Heart right ventricle (tissue), 16 donors: ENCODE measurements at regions of chr1 and their contacts with region 1.

Region 1: DNA sequence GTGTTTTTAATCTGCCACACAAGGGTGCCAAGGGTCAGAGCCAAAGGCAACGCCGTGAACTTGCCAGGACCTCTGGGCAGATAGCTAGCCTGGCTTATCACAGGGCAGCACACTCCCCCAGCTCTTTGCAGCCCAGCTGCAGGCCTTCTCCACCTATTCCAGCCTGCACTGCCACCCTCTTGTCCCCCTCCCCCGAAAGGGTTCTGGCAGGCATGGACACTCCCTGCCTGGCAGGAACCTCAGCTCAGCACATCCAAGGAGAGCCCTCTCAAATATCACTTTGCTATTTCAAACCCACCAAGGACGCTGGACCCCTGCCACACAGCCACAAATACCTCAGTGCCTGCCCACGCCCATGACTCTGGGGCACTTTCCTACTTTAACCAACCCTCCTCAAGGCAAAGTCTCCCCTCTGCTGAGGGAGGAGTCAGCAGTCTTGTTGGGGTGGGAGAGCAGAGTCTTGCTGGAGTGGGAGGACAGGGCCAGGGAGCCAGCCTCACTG is 9.1 kb downstream of the SSBP3 start:
- DNase-seq: peak; percentile 69 to 77
- ATAC-seq: peak; percentile 88 to 96 (median 94)
- H3K4me3 ChIP-seq: no peak overlapping the region
- H3K27ac ChIP-seq: peak overlapping the region in 9 of 10 donors; percentile 50 to 86 (median 73)
- H3K4me1 ChIP-seq: peaks cover 0 to 74% (median 46%) of the 10 kb centered on the region in 9 donors
- H3K27me3 ChIP-seq: no peaks in the 10 kb centered on the region
- CTCF ChIP-seq: no peak

Region 2: DNA sequence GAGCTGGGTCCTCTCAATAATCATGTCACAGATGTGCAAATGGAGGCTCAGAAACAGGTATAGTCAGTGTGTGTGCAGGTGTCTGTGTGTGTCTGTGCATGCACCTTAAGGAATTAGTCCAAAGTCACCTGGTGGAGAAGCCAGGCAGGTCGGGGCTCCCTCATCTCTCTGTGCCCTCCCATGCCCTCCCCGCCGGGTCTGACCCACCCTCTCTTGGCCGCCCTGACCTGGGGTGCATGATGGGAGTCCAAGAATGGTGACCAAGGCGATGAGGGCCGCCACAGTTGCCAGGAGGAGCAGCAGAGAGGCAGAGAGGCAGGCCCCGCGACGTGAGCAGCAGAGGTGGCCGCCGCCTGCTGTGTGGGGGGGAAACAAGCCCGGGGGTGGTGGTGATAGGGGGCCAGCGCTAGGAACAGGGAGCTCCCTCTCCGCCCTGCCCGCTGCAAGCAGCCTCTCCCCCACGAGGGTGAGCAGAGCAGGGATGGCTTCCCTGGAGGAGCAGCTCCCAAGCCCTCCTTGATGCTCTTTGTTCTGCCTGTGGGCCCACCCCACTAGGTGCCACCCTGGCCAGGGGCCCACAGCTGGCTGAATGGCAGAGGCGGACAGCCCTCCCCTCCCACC is 383.0 kb before region 1 on chr1:
- intact Hi-C with region 1: no loop called
- DNase-seq: no peak
- ATAC-seq: no peak
- H3K4me3 ChIP-seq: no peak overlapping the region
- H3K27ac ChIP-seq: no peak overlapping the region
- H3K4me1 ChIP-seq: no peaks in the 10 kb centered on the region
- H3K27me3 ChIP-seq: peaks cover 0 to 54% (median 19%) of the 10 kb centered on the region in 7 donors
- CTCF ChIP-seq: no peak

Region 3: DNA sequence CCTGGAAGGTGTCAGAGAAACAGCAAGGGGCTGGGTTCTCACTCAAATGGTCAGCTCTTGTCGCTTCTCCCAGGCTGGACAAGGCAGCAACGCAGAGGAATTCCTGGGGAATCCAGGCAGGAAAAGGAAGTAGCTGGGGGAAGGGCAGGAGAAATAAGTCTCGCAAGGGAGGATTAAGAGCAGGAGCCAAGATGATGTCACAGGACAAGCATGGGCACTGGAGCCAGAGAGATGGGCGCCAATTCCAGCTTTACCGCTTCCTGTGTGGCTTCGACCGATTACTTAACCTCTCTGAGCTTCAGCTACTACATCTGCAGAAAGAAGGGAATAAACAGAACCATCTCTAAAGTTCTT is 61.4 kb before region 1 on chr1:
- intact Hi-C with region 1: loop called in 1 of 10 experiments (anchors 10 kb)
- DNase-seq: peak; percentile 47 to 87
- ATAC-seq: peak; percentile 16 to 82 (median 75)
- H3K4me3 ChIP-seq: peak overlapping the region in 7 of 10 donors; percentile 14 to 43 (median 27)
- H3K27ac ChIP-seq: peak overlapping the region in 9 of 10 donors; percentile 71 to 93 (median 79)
- H3K4me1 ChIP-seq: peaks cover 36 to 100% (median 77%) of the 10 kb centered on the region in 9 donors
- H3K27me3 ChIP-seq: no peaks in the 10 kb centered on the region
- CTCF ChIP-seq: no peak

Region 4: DNA sequence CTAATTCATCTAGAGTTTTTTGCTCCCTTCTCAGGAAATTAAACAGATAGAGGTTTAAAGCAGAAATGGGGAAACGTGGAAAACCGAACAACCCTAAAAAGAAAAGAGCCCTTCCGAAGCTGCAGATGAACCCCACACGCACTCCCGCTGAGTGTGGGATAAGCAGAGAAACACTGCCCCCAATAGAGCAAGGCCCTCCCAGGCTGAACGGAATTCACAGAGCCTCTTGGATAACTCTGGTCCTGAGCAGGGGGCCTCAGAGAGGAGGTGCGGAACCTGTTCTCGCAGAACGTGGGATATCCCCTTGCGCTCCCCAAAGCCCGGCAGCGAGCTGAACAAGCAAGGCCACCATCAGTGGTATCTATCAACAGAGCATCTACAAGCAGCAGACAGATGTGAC is 35.8 kb before region 1 on chr1:
- intact Hi-C with region 1: loop called in 3 of 10 experiments (anchors 5 kb)
- DNase-seq: no peak
- ATAC-seq: no peak
- H3K4me3 ChIP-seq: no peak overlapping the region
- H3K27ac ChIP-seq: peak overlapping the region in 1 of 10 donors; percentile 87
- H3K4me1 ChIP-seq: peaks cover 8 to 91% (median 61%) of the 10 kb centered on the region in 9 donors
- H3K27me3 ChIP-seq: no peaks in the 10 kb centered on the region
- CTCF ChIP-seq: peak in 5 of 9 donors; percentile 15 to 52 (median 32)